ENCODE measurements at regions of chr3 and their contacts with region 1.

Region 1: GRCh38 chr3:168040607-168041208 is 55.0 kb downstream of the GOLIM4 start:
- DNase-seq: no peak
- H3K4me3 Mint-ChIP-seq: no peak overlapping the region
- H3K27ac Mint-ChIP-seq: no peak overlapping the region
- H3K4me1 Mint-ChIP-seq: no peaks in the 10 kb centered on the region
- H3K27me3 Mint-ChIP-seq: no peaks in the 10 kb centered on the region

Region 2: DNA sequence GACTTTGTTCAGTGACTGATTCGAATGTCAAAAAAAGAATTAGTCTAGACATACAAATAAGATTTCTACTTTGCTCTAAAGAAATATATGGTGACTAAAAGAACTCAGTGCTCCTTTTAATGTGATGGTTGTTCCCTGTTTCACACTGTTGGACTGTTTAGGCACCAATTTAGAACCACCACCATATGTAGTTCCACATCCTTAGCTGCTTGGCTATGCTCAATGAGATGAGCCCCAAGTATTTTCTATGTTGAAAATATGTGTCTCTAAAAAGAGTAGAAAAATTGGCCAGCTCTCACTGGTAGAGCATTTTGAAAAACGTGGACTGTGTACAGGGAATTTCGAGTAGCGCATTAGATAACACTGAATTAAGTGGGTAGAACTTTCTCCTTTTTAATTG is 112.3 kb before region 1 on chr3:
- intact Hi-C with region 1: loop called (anchors 1 kb)
- DNase-seq: no peak
- H3K4me3 Mint-ChIP-seq: no peak overlapping the region
- H3K27ac Mint-ChIP-seq: no peak overlapping the region
- H3K4me1 Mint-ChIP-seq: no peaks in the 10 kb centered on the region
- H3K27me3 Mint-ChIP-seq: no peaks in the 10 kb centered on the region

Region 3: DNA sequence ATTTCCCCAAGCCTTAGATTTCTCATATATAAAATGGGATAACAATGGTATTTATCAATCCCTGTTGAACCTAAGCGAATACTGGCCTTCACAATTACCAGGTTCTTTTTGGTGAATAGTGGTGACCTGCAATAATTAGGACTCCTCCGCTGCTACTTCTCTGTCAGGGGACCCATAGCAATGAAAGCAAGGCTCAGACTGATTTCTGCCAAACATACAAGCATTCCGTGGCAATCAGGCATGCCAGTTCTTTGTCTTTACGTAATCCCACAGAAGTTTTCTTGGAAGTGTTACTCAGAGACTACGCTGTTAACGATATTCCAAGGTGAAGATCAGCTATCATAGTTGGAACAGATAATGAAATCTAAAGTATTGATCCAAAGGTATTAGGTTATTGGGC is 50.7 kb before region 1 on chr3:
- intact Hi-C with region 1: loop called (anchors 5 kb)
- DNase-seq: no peak
- H3K4me3 Mint-ChIP-seq: no peak overlapping the region
- H3K27ac Mint-ChIP-seq: no peak overlapping the region
- H3K4me1 Mint-ChIP-seq: no peaks in the 10 kb centered on the region
- H3K27me3 Mint-ChIP-seq: peaks cover 5% of the 10 kb centered on the region

Region 4: DNA sequence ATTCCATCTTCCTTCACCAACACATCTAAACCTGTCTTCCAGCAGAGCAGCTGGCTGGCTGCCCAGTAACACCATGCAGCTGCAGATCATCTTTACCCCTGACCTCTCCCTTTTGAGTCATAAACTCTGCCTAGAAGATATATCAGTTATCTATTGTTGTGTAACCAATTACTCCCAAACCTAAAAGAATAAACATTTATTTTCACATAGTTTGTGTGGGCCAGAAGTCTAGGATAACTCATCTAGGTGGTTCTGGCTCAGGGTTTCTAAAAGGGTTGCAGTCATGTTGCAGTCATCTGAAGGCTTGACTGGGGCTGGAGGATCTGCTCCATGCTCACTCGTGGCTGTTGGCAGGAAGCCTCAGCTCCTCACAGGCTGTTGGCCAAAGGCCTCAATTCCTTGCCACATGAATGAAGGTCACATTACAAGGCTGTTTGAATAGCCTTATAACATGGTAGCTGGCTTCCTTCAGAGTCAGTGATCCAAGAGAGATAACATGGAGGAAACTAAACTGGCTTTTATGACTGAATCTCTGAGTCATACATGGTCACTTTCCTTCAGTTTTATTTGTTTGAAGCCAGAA is 37.8 kb before region 1 on chr3:
- intact Hi-C with region 1: no loop called
- DNase-seq: no peak
- H3K4me3 Mint-ChIP-seq: no peak overlapping the region
- H3K27ac Mint-ChIP-seq: no peak overlapping the region
- H3K4me1 Mint-ChIP-seq: no peaks in the 10 kb centered on the region
- H3K27me3 Mint-ChIP-seq: peaks cover 2% of the 10 kb centered on the region

Region 5: DNA sequence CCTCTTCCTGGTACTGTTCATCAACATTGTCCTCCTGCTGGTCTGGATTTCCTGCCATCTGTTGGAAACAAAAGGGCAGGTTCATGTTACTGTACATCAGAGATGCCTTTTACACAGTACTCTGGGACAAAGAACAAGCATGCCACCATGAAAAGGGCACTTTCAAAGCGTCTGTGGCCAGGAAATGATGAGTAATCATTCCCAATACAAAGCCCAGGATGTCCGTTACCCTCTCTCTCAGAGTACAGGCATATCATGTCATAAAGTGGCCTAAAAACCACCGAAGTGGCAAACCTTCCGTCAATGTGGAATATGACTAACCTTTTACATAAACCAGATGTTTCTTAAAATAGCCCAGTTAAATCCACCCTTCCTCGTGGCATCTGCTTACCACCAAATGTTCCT is 16.2 kb before region 1 on chr3:
- intact Hi-C with region 1: loop called (anchors 2 kb)
- DNase-seq: peak; percentile 26
- H3K4me3 Mint-ChIP-seq: peak overlapping the region; percentile 12
- H3K27ac Mint-ChIP-seq: peak overlapping the region; percentile 71
- H3K4me1 Mint-ChIP-seq: peaks cover 50% of the 10 kb centered on the region
- H3K27me3 Mint-ChIP-seq: no peaks in the 10 kb centered on the region

Region 6: DNA sequence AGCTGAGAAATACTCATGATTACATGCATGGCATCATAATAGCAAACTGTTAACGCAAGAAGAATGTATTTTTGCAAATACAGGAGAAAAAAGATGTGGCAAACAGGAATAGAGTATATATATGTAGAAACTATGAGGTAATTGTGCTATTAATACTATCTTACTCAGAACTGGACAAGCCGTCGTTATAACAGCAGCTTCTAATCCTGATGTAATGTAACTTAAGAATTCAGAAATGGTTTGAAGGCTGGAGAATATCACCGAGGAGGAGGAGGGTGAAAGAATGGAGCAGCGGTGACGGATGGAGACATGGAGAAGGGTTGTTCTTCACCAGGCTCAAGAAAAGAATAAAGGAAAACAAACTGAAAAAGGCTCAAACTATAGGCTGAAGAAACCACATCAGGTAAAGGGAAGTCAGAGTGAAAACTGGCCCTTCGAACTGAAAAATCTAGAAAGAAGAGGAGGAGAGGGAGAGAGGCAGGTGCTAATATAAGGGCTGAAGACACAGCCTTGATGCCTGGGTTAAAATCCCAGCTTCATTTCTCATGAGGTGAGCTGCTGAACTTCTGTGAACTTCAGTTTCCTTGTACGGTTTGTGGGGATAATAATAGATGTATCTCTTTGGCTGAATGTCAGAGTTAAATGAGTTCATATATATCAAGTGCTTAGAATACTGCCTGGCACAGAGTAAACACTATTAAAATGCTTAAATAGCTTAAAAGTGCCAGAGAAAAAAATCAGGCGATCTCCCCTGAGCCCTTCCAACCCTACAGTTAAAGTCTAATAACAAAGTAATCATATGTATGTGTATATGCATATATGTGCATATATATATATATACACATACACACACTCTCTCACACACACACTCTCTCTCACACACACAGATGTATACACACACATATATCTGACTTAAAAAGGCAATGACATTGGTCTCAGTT is 11.1 kb after region 1 on chr3:
- intact Hi-C with region 1: no loop called
- DNase-seq: no peak
- H3K4me3 Mint-ChIP-seq: no peak overlapping the region
- H3K27ac Mint-ChIP-seq: no peak overlapping the region
- H3K4me1 Mint-ChIP-seq: no peaks in the 10 kb centered on the region
- H3K27me3 Mint-ChIP-seq: peaks cover 2% of the 10 kb centered on the region